Dendritic cell treated with granulocyte-macrophage colony-stimulating factor and Interleukin-4, amounts not matched to agents 40 ng/mL and 50 ng/mL, for 4 days (primary cell): ENCODE measurements at regions of chr2 and their contacts with region 1.

Region 1: DNA sequence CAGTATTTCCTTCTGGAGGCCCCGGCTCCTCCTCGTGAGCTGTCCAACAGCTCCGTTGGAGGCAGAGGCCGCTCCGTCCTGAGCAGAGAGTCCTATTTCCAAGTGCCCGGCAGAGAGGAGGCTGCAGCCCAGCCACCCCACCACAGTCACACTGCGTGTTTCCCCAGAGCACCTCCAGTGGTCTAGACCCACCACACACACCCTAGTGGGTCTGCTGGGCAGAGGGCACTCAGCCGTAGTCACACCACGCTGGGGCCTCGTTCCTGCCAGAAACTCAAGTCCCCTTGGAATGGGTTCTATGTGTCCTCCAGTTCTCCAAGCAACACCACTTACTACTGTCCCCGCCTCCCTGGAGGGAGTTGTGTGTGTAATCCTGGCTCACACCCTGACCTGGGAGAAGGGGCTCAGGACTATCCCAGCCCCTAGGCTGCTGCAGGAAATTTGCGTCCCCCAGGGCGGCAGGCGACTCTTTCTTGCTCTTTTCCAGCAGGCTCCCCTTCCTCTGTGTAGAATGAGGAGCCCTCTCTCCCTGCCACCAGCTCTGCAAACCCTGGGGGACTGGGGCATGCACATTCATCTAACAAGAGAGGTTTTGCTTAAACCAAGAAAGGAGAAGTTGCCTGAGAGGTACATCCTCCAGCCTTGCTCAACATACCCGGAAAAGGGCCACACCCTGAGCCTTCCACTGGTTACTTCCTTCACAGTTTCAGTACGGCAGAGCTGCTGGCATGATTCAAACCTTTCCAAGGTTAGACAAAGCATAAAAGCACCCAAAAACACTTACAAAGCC is 114.1 kb downstream of the NDUFA10 start:
- H3K4me3 Mint-ChIP-seq: peak overlapping the region; percentile 78
- H3K27ac Mint-ChIP-seq: no peak overlapping the region
- H3K4me1 Mint-ChIP-seq: peaks cover 46% of the 10 kb centered on the region
- H3K27me3 Mint-ChIP-seq: no peaks in the 10 kb centered on the region

Region 2: DNA sequence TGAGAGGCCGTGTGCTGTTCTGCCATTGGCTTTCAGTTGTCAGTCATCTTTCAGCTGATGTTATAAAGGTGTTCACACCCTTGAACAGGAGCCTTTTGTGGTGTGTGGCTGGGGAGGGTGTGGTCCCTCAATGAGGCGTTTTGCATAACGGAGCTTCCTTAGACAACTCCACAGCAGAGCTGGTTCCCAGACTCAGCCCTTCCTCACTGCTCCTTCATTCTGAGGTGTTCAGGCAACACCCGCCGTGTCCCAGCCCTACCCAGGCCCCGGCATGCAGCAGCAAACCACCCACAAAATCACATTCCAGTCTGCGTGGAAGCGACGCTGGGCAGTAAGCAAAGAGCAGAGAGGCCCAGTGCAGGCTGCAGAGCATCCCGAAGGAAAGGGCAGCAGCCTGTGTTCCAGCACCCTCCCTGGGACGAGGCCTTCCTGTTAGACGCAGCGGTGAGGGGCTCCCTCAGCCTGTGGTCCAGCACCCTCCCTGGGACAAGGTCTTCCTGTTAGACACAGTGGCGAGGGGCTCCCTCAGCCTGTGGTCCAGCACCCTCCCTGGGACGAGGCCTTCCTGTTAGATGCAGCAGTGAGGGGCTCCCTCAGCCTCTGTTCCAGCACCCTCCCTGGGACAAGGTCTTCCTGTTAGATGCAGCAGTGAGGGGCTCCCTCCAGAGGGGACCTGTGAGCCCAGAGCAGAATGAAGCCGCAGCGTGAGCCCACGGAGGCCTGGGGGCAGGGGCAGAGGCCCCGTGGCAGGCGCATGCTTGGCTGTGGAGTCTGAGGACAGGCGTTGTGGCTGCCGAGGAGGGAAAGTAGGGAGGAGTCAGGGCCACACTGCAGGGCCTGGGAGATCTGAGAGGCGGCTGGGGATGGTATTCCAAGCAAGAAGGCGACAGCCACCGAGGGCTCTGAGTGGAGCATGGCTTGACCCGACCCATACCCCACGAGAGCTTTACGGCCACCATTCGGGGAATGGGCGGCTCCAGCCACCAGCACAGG is 308.5 kb before region 1 on chr2:
- intact Hi-C with region 1: loop called (anchors 10 kb)
- H3K4me3 Mint-ChIP-seq: no peak overlapping the region
- H3K27ac Mint-ChIP-seq: no peak overlapping the region
- H3K4me1 Mint-ChIP-seq: peaks cover 45% of the 10 kb centered on the region
- H3K27me3 Mint-ChIP-seq: peaks cover 8% of the 10 kb centered on the region

Region 3: GRCh38 chr2:239873656-239874635 is 37.1 kb before region 1 on chr2:
- intact Hi-C with region 1: no loop called
- H3K4me3 Mint-ChIP-seq: no peak overlapping the region
- H3K27ac Mint-ChIP-seq: no peak overlapping the region
- H3K4me1 Mint-ChIP-seq: peaks cover 31% of the 10 kb centered on the region
- H3K27me3 Mint-ChIP-seq: peaks cover 27% of the 10 kb centered on the region

Region 4: GRCh38 chr2:239895669-239896068 is 15.4 kb before region 1 on chr2:
- intact Hi-C with region 1: loop called (anchors 2 kb)
- H3K4me3 Mint-ChIP-seq: peak overlapping the region; percentile 18
- H3K27ac Mint-ChIP-seq: peak overlapping the region; percentile 79
- H3K4me1 Mint-ChIP-seq: peaks cover 70% of the 10 kb centered on the region
- H3K27me3 Mint-ChIP-seq: peaks cover 3% of the 10 kb centered on the region

Region 5: GRCh38 chr2:240205348-240205747 is 294.3 kb after region 1 on chr2:
- intact Hi-C with region 1: no loop called
- H3K4me3 Mint-ChIP-seq: no peak overlapping the region
- H3K27ac Mint-ChIP-seq: no peak overlapping the region
- H3K4me1 Mint-ChIP-seq: no peaks in the 10 kb centered on the region
- H3K27me3 Mint-ChIP-seq: peaks cover 24% of the 10 kb centered on the region